IMR-90 (cell line): ENCODE measurements at regions of chr3 and their contacts with region 1.

Region 1: DNA sequence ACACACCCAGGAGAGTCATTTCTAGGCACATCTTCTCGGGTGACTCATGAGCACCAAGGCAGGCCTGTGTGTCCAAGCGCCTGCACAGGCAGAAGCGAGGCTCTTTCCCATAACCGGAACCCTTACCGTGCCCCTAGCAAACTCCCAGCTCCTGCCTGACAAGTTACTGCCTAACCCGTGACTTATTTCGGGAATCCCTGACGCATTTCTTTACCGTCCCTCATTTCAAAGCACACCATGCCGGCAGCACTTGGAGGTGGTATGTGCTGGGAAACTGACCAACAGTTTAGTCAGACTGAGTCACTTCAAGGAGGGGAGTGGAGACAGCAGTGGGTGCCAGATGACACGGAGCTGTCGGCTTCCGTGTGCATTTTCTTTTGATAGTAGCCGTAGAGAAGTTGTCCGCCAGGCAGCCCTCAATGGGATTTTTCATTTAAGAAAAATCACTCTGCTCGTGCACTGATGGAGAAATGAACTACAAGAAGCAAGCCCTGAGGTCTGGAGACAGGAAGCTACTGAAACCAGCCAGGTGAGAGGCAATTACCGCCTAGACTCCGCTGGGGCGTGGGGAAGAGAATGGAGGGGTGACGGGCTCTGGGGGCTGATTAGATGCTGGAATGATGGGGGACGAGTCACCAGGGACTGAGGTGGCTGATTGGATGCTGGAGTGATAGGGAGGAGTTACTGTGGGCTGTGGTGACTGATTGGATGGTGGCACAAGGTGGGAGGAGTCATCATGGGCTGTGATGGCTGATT is 17.2 kb upstream of the HRH1 start:
- DNase-seq: peak; percentile 100
- ATAC-seq: peak; percentile 89
- H3K4me3 ChIP-seq: peak overlapping the region; percentile 40
- H3K27ac ChIP-seq: peak overlapping the region; percentile 85
- H3K4me1 ChIP-seq: peaks cover 8% of the 10 kb centered on the region
- H3K27me3 ChIP-seq: no peaks in the 10 kb centered on the region
- CTCF ChIP-seq: no peak
- POLR2A ChIP-seq: peak; percentile 95
- RAD21 ChIP-seq: peak; percentile 39

Region 2: GRCh38 chr3:10627885-10628572 is 509.0 kb before region 1 on chr3:
- CTCF ChIA-PET with region 1: no interaction called
- POLR2A ChIA-PET with region 1: no interaction called
- dilution Hi-C with region 1: no loop called
- in situ Hi-C with region 1: no loop called
- intact Hi-C with region 1: no loop called
- DNase-seq: no peak
- ATAC-seq: no peak
- H3K4me3 ChIP-seq: no peak overlapping the region
- H3K27ac ChIP-seq: no peak overlapping the region
- H3K4me1 ChIP-seq: no peaks in the 10 kb centered on the region
- H3K27me3 ChIP-seq: 0 out of 2 replicates have a peak, but pooled peaks cover 1% of the 10 kb centered on the region
- CTCF ChIP-seq: no peak
- POLR2A ChIP-seq: no peak
- RAD21 ChIP-seq: no peak

Region 3: DNA sequence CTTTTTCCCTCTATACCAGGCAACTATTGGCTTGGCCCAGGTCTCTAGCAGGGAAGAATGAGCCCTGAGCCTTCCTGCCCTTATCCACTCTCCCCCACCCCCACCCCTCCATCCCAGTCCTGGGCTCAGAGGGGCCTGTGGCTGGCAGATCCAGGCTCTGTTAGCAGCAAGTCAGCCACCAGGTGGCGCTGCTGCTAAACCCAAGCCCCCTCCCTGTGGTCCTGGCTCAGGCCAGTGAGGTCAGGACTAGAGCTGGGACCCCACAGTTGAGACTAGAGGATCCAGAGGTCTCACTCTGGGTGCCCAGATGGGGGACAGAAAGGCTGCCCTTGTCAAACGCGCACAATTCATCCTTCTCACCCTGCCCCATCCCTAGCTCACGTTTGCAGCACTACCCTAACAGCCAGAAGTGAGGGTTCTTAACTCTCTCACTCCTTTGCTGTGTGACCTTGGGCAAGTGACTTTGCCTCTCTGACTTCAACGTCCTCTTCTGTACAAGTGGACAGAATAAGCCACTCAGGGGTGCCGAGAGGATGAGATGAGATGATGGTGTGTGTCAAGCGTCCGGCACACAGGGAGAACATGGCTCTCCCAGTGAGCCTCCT is 191.3 kb before region 1 on chr3:
- CTCF ChIA-PET with region 1: no interaction called
- POLR2A ChIA-PET with region 1: no interaction called
- dilution Hi-C with region 1: no loop called
- in situ Hi-C with region 1: no loop called
- intact Hi-C with region 1: loop called (anchors 10 kb)
- DNase-seq: peak; percentile 25
- ATAC-seq: peak; percentile 88
- H3K4me3 ChIP-seq: no peak overlapping the region
- H3K27ac ChIP-seq: no peak overlapping the region
- H3K4me1 ChIP-seq: no peaks in the 10 kb centered on the region
- H3K27me3 ChIP-seq: peaks cover 13% of the 10 kb centered on the region
- CTCF ChIP-seq: peak; percentile 66
- POLR2A ChIP-seq: no peak
- RAD21 ChIP-seq: peak; percentile 58

Region 4: GRCh38 chr3:11096266-11097135 is 40.5 kb before region 1 on chr3:
- CTCF ChIA-PET with region 1: no interaction called
- POLR2A ChIA-PET with region 1: no interaction called
- dilution Hi-C with region 1: no loop called
- in situ Hi-C with region 1: no loop called
- intact Hi-C with region 1: loop called (anchors 2 kb)
- DNase-seq: peak; percentile 91
- ATAC-seq: peak; percentile 98
- H3K4me3 ChIP-seq: peak overlapping the region; percentile 27
- H3K27ac ChIP-seq: peak overlapping the region; percentile 63
- H3K4me1 ChIP-seq: peaks cover 9% of the 10 kb centered on the region
- H3K27me3 ChIP-seq: no peaks in the 10 kb centered on the region
- CTCF ChIP-seq: no peak
- POLR2A ChIP-seq: peak; percentile 78
- RAD21 ChIP-seq: peak; percentile 35